ENCODE measurements at regions of chr2 and their contacts with region 1.

Region 1: GRCh38 chr2:165293440-165294353 is 54.5 kb downstream of the SCN2A start:
- DNase-seq: peak in 3 of 10 donors; percentile 20 to 65 (median 22)

Region 2: GRCh38 chr2:165015052-165015642 is 278.6 kb before region 1 on chr2:
- intact Hi-C with region 1: loop called (anchors 10 kb)
- DNase-seq: peak in 7 of 10 donors; percentile 59 to 92 (median 74)

Region 3: GRCh38 chr2:165239856-165240515 is 53.7 kb before region 1 on chr2:
- intact Hi-C with region 1: loop called (anchors 5 kb)
- DNase-seq: peak in 2 of 10 donors; percentile 6 to 12